ENCODE measurements at regions of chr3 and their contacts with region 1.

Region 1: GRCh38 chr3:42581709-42582473 is at the start of gene SEC22C:
- DNase-seq: peak; percentile 94 to 96 (median 95)
- H3K4me3 ChIP-seq: peak within 1 kb of the TSS; percentile 69 to 90 (median 85)
- H3K27ac ChIP-seq: peak within 1 kb of the TSS; percentile 89 to 96
- H3K4me1 ChIP-seq: peaks cover 13 to 26% (median 20%) of the 10 kb centered on the region in 4 experiments
- H3K27me3 ChIP-seq: no peaks in the 10 kb centered on the region

Region 2: DNA sequence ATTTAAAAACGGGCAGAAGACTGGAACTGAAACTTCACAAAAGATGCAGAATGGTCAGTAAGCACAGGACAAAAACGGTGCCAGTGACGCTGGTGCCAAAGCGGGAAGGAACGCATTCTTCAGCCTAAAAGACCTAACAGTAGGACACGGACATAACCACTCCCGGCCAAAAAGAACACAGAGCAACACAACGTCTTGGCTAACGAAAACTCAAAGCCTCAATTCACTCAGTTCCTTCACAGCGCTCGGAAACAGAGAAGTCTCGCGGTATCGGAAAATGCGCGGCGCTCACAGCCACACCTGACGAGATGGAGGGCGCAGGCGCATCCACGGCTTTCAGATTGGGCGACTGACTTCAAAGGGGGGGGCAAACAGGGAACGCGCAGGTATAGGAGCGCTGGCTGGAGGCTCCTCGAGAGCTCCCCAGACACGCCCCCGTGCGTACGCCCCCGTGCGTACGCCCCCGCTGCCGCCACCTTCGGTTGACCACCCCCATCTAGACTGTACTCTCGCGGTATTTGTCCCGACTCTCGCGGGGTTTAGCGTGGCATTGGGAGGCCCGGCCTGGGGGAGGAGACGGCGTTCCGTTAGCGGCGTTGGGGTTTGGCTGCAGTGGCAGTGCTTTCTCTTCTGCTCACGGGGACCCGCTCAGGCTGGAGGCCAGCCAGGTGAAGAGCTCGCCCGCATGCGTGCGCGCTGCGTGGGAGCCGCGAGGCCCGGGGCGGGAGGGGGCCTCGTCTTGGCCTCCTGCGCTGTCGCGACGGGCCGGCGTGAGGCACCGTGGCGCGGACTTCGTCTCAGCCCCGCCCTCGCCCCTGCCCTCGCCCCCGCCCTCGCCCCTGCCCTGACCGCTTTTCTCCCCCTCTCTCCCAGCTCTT is 18.5 kb after region 1 on chr3 and contains the start of gene NKTR:
- CTCF ChIA-PET with region 1: interaction called, 25 read pairs
- POLR2A ChIA-PET with region 1: no interaction called
- DNase-seq: peak; percentile 99 to 100 (median 100)
- H3K4me3 ChIP-seq: peak within 1 kb of the TSS; percentile 60 to 92 (median 84)
- H3K27ac ChIP-seq: peak within 1 kb of the TSS; percentile 93 to 94
- H3K4me1 ChIP-seq: peaks cover 6 to 20% (median 10%) of the 10 kb centered on the region in 4 experiments
- H3K27me3 ChIP-seq: no peaks in the 10 kb centered on the region

Region 3: DNA sequence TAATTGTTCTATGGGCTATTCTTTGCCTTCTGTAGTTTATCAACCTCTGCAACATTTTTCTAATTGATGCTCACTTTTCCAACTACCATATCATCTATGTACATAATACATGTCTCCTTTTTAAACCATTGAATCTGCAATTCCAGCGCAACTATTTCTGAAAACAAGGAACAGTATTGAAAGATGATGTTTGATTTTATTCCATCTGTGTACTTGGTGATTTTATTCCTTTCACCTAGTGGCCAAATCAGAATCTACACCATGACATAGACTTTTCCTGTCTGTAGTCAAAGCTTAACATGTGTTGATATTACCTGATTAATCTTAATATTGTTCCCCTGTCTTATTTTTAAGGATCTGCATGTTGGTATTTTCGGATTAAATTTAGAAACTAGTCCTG is 31.6 kb after region 1 on chr3:
- CTCF ChIA-PET with region 1: interaction called, 14 read pairs
- POLR2A ChIA-PET with region 1: no interaction called
- DNase-seq: peak; percentile 46 to 73 (median 69)
- H3K4me3 ChIP-seq: no peak overlapping the region
- H3K27ac ChIP-seq: no peak overlapping the region
- H3K4me1 ChIP-seq: peaks cover 6 to 29% (median 20%) of the 10 kb centered on the region in 4 experiments
- H3K27me3 ChIP-seq: no peaks in the 10 kb centered on the region

Region 4: GRCh38 chr3:42635111-42635510 is 53.2 kb after region 1 on chr3:
- CTCF ChIA-PET with region 1: interaction called, 20 read pairs
- POLR2A ChIA-PET with region 1: no interaction called
- DNase-seq: peak; percentile 51 to 81 (median 76)
- H3K4me3 ChIP-seq: no peak overlapping the region
- H3K27ac ChIP-seq: peak overlapping the region in 1 of 2 experiments; percentile 21
- H3K4me1 ChIP-seq: no peaks in the 10 kb centered on the region
- H3K27me3 ChIP-seq: no peaks in the 10 kb centered on the region

Region 5: DNA sequence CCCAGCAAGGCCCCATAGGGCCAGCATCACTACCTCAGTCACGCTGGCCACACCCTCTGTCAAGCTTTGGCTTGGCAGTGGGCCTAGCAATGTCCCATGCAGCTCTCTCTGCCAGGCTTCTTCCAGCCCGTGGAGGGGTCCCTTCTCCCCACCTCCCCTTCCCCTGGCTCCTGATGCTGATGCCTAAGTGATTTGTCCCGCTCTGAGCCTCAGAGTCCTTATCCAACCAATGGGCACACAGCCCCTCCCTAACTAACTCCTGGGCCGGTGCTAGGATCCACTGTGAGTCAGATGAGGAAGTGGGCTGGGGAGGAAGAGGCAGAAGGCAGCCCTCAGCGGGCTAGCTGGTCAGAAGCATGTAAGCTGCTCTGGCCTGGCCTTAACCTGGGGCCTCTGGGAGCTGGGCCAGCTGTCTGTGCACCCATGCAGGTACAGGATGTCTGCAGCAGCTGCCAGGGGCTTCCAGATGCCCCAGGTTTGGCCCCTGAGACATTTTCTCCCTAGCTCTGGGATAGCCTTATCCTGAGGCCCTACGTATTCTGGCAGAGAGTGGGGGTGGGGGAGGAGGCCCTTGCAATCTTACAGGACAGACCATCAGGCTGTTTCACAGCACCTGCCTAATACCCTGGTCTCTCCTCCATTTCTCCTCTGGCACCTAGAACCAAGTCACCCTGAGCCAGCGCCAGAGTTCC is 70.9 kb after region 1 on chr3:
- CTCF ChIA-PET with region 1: interaction called, 11 read pairs
- POLR2A ChIA-PET with region 1: no interaction called
- DNase-seq: peak; percentile 42 to 82 (median 74)
- H3K4me3 ChIP-seq: peak overlapping the region in 3 of 7 experiments; percentile 5 to 84 (median 72)
- H3K27ac ChIP-seq: no peak overlapping the region
- H3K4me1 ChIP-seq: peaks cover 6 to 34% (median 32%) of the 10 kb centered on the region in 4 experiments
- H3K27me3 ChIP-seq: no peaks in the 10 kb centered on the region

Region 6: DNA sequence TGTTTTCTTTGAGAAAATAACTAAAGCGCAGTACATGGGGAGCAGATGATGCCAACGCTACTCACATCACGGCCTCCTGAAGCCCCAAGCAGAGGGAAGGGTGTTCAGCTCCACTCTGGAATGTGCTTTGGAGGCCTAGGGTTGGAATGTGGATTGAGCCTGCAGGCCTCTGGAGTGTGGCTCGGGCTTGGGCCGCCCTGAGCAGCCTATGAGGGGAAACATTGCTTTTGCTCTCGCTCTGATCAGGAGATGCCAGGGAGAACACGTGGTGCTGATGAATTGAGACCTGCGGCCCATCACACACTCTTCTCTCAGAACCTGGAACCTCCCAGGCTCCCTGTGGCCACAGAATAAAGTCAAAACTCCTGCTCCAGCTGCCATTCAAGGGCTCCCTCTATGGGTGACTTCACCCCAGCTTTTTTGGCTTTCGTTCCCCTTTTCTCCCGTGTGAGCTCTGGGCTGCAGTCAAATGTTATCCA is 167.9 kb after region 1 on chr3:
- CTCF ChIA-PET with region 1: interaction called, 10 read pairs
- POLR2A ChIA-PET with region 1: no interaction called
- DNase-seq: peak; percentile 23 to 60 (median 48)
- H3K4me3 ChIP-seq: no peak overlapping the region
- H3K27ac ChIP-seq: no peak overlapping the region
- H3K4me1 ChIP-seq: no peaks in the 10 kb centered on the region
- H3K27me3 ChIP-seq: peaks cover 0 to 2% (median 0%) of the 10 kb centered on the region in 5 experiments